Ovary (tissue), 10 donors: ENCODE measurements at regions of chr7 and their contacts with region 1.

Region 1: GRCh38 chr7:109806548-109806947 is 1236.9 kb downstream of the DNAJB9 start:
- DNase-seq: no peak
- H3K4me3 ChIP-seq: no peak overlapping the region
- H3K27ac ChIP-seq: no peak overlapping the region
- H3K4me1 ChIP-seq: no peaks in the 10 kb centered on the region
- H3K27me3 ChIP-seq: no peaks in the 10 kb centered on the region
- CTCF ChIP-seq: no peak
- EP300 ChIP-seq: no peak
- POLR2A ChIP-seq: no peak

Region 2: DNA sequence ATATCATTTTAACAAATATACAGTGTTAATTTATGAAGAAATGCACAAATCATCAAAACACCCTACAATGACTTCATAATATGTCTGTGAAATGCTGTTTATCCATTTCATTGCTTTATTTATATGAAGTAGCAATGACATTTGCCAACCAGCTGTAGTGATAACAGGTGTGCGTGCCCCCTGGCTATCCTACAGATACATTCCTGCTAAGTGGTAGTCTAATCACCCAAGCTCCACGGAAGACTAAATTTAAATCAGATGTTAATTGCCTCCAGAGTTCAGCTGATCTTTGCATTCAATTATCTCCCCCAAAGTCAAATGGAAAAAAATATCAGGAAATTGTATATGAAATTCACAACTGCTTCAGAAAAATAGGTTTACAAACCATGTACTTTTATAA is 120.2 kb after region 1 on chr7:
- intact Hi-C with region 1: no loop called
- DNase-seq: no peak
- H3K4me3 ChIP-seq: no peak overlapping the region
- H3K27ac ChIP-seq: no peak overlapping the region
- H3K4me1 ChIP-seq: no peaks in the 10 kb centered on the region
- H3K27me3 ChIP-seq: no peaks in the 10 kb centered on the region
- CTCF ChIP-seq: no peak
- EP300 ChIP-seq: no peak
- POLR2A ChIP-seq: no peak

Region 3: GRCh38 chr7:110148054-110148453 is 341.5 kb after region 1 on chr7:
- intact Hi-C with region 1: no loop called
- DNase-seq: peak in 1 of 5 donors; percentile 4
- H3K4me3 ChIP-seq: no peak overlapping the region
- H3K27ac ChIP-seq: no peak overlapping the region
- H3K4me1 ChIP-seq: no peaks in the 10 kb centered on the region
- H3K27me3 ChIP-seq: no peaks in the 10 kb centered on the region
- CTCF ChIP-seq: no peak
- EP300 ChIP-seq: no peak
- POLR2A ChIP-seq: no peak

Region 4: DNA sequence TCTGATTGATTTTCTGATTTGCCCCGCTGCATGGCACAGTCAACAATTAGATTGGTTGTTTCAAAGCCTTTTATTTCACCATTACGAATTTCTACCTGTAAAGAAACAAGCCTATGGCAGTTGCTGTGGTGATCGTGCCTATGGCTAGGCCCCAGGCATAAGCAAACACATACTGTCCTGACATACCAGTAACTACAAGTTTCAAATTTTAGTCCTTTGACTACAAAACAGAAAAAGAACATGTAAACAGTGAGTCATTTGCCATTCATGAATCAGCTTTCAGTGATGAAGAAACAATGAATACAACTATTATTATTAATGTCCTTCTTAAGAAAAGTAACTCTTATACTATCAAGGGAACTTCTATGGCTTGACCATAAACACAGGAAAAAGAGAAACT is 1116.4 kb after region 1 on chr7:
- intact Hi-C with region 1: loop called in 1 of 4 experiments (anchors 5 kb)
- DNase-seq: no peak
- H3K4me3 ChIP-seq: no peak overlapping the region
- H3K27ac ChIP-seq: no peak overlapping the region
- H3K4me1 ChIP-seq: peaks cover 4% of the 10 kb centered on the region
- H3K27me3 ChIP-seq: no peaks in the 10 kb centered on the region
- CTCF ChIP-seq: no peak
- EP300 ChIP-seq: no peak
- POLR2A ChIP-seq: no peak